ENCODE measurements at regions of chr19 and their contacts with region 1.

Region 1: GRCh38 chr19:6297202-6297601 is 17.4 kb upstream of the MLLT1 start:
- DNase-seq: no peak
- ATAC-seq: no peak
- H3K4me3 ChIP-seq: no peak overlapping the region
- H3K4me3 Mint-ChIP-seq: no peak overlapping the region
- H3K27ac ChIP-seq: no peak overlapping the region
- H3K27ac Mint-ChIP-seq: no peak overlapping the region
- H3K4me1 ChIP-seq: no peaks in the 10 kb centered on the region
- H3K4me1 Mint-ChIP-seq: no peaks in the 10 kb centered on the region
- H3K27me3 ChIP-seq: no peaks in the 10 kb centered on the region
- H3K27me3 Mint-ChIP-seq: peaks cover 0 to 6% of the 10 kb centered on the region in 2 donors
- CTCF ChIP-seq: no peak

Region 2: DNA sequence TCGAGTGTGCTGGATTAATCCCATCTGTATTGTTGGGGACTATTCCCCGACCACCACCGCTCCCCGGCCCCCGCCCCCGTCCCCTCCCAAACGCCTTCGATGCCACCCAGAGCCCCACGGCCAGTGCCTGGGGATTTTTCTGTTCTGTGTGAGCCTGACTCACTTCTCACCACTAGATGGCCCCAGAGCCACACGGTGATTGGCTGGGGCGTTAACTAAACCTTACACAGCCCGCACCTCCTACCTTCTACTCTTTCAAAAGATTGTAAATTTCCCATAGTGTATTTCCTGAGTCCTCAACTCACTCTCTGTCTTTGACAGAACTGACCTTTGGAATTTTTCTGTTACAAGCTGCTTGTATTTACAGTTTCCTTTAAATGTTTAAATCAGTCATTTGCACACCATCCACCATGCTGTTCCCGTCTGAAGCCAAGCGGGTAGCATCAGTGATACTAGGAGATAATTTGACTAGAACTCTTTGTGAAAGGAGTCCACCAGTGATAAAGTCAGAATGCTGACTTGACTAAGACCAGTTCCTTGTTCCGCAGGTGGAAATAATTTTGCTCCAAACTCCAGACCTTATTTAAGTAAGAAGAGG is 248.3 kb before region 1 on chr19:
- intact Hi-C with region 1: loop called (anchors 5 kb)
- DNase-seq: peak; percentile 65 to 91
- ATAC-seq: peak; percentile 95 to 100 (median 100)
- H3K4me3 ChIP-seq: no peak overlapping the region
- H3K4me3 Mint-ChIP-seq: no peak overlapping the region
- H3K27ac ChIP-seq: no peak overlapping the region
- H3K27ac Mint-ChIP-seq: no peak overlapping the region
- H3K4me1 ChIP-seq: no peaks in the 10 kb centered on the region
- H3K4me1 Mint-ChIP-seq: peaks cover 5 to 7% of the 10 kb centered on the region in 2 donors
- H3K27me3 ChIP-seq: no peaks in the 10 kb centered on the region
- H3K27me3 Mint-ChIP-seq: peaks cover 9 to 10% of the 10 kb centered on the region in 2 donors
- CTCF ChIP-seq: peak; percentile 81

Region 3: DNA sequence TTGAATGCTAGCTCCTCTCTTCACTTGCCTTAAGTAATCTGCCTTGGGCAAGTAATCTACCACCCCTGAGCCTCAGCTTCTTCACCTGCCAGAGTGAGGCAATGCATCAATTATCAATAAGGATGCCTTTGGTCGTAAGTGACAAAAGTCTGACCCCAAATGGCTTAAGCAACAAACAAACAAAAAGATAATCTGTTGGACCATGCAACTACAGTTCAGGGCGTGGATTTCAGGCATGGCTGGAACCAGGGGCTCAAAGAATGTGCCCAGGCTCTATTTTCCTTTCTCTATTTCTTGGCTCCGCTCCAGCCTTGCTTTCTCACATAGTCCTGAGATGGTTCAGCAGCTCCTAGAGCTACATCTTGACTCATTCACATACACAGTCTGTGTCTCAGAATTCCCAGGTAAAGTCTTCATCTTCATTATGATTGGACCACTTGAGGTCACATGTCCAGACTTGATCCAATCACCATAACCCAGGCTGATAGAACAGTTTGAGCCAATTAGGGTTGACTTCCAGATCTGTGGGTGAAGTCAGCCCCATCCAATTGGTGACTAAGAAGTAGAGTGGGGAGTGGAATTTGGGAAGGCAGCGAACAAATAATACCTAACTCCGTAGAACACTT is 132.2 kb before region 1 on chr19:
- intact Hi-C with region 1: loop called (anchors 5 kb)
- DNase-seq: no peak
- ATAC-seq: no peak
- H3K4me3 ChIP-seq: no peak overlapping the region
- H3K4me3 Mint-ChIP-seq: no peak overlapping the region
- H3K27ac ChIP-seq: no peak overlapping the region
- H3K27ac Mint-ChIP-seq: no peak overlapping the region
- H3K4me1 ChIP-seq: peaks cover 13% of the 10 kb centered on the region
- H3K4me1 Mint-ChIP-seq: peaks cover 0 to 8% of the 10 kb centered on the region in 2 donors
- H3K27me3 ChIP-seq: no peaks in the 10 kb centered on the region
- H3K27me3 Mint-ChIP-seq: peaks cover 0 to 4% of the 10 kb centered on the region in 2 donors
- CTCF ChIP-seq: no peak

Region 4: GRCh38 chr19:6218491-6219162 is 78.6 kb before region 1 on chr19:
- intact Hi-C with region 1: loop called (anchors 1 kb)
- DNase-seq: peak; percentile 83 to 87
- ATAC-seq: peak; percentile 76 to 98 (median 92)
- H3K4me3 ChIP-seq: no peak overlapping the region
- H3K4me3 Mint-ChIP-seq: no peak overlapping the region
- H3K27ac ChIP-seq: no peak overlapping the region
- H3K27ac Mint-ChIP-seq: no peak overlapping the region
- H3K4me1 ChIP-seq: no peaks in the 10 kb centered on the region
- H3K4me1 Mint-ChIP-seq: peaks cover 0 to 3% of the 10 kb centered on the region in 2 donors
- H3K27me3 ChIP-seq: no peaks in the 10 kb centered on the region
- H3K27me3 Mint-ChIP-seq: no peaks in the 10 kb centered on the region
- CTCF ChIP-seq: peak; percentile 90